ENCODE measurements at regions of chr11 and their contacts with region 1.

Region 1: GRCh38 chr11:117107701-117108590 is 9.7 kb upstream of the SIK3 start:
- DNase-seq: no peak
- H3K4me3 ChIP-seq: no peak overlapping the region
- H3K27ac ChIP-seq: no peak overlapping the region
- H3K4me1 ChIP-seq: no peaks in the 10 kb centered on the region
- H3K27me3 ChIP-seq: no peaks in the 10 kb centered on the region
- CTCF ChIP-seq: no peak
- EP300 ChIP-seq: no peak
- POLR2A ChIP-seq: no peak

Region 2: GRCh38 chr11:116879800-116880625 is 227.9 kb before region 1 on chr11:
- intact Hi-C with region 1: loop called in 3 of 4 experiments (anchors 5 kb)
- DNase-seq: no peak
- H3K4me3 ChIP-seq: no peak overlapping the region
- H3K27ac ChIP-seq: no peak overlapping the region
- H3K4me1 ChIP-seq: no peaks in the 10 kb centered on the region
- H3K27me3 ChIP-seq: no peaks in the 10 kb centered on the region
- CTCF ChIP-seq: peak in 2 of 3 donors; percentile 55 to 76
- EP300 ChIP-seq: no peak
- POLR2A ChIP-seq: no peak

Region 3: GRCh38 chr11:116890193-116890592 is 217.8 kb before region 1 on chr11:
- intact Hi-C with region 1: loop called in 1 of 4 experiments (anchors 5 kb)
- DNase-seq: no peak
- H3K4me3 ChIP-seq: no peak overlapping the region
- H3K27ac ChIP-seq: no peak overlapping the region
- H3K4me1 ChIP-seq: peaks cover 2% of the 10 kb centered on the region
- H3K27me3 ChIP-seq: no peaks in the 10 kb centered on the region
- CTCF ChIP-seq: no peak
- EP300 ChIP-seq: no peak
- POLR2A ChIP-seq: no peak